ENCODE measurements at regions of chr19 and their contacts with region 1.

Region 1: GRCh38 chr19:53520550-53521372 is 17.2 kb upstream of the ZNF331 start:
- DNase-seq: peak; percentile 93
- ATAC-seq: peak; percentile 99
- H3K4me3 Mint-ChIP-seq: peak overlapping the region; percentile 100
- H3K27ac Mint-ChIP-seq: peak overlapping the region; percentile 89
- H3K4me1 Mint-ChIP-seq: peaks cover 15% of the 10 kb centered on the region
- H3K27me3 Mint-ChIP-seq: no peaks in the 10 kb centered on the region

Region 2: DNA sequence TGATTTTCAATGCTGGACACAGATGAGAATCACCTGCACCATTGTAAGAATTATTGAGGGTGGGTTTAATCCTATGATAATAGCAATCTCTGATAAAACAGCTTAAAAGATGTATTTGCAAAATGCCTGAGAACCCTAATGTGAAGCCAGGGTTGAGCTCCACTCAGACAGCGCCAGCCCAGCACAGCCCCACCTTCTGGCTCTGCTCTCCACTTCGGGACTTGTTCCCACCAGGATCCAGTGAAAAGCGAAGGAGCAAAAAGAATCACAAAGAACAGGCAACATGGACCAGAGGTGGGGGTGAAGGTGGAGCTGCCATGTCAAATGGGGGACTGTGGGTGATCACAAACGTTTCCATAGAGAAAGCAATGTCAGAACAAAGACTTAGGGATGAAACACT is 539.4 kb before region 1 on chr19:
- CTCF ChIA-PET with region 1: no interaction called
- POLR2A ChIA-PET with region 1: no interaction called
- intact Hi-C with region 1: no loop called
- DNase-seq: no peak
- ATAC-seq: no peak
- H3K4me3 Mint-ChIP-seq: no peak overlapping the region
- H3K27ac Mint-ChIP-seq: no peak overlapping the region
- H3K4me1 Mint-ChIP-seq: no peaks in the 10 kb centered on the region
- H3K27me3 Mint-ChIP-seq: no peaks in the 10 kb centered on the region

Region 3: GRCh38 chr19:53254411-53255341 is 266.1 kb before region 1 on chr19 and contains the start of gene ZNF677:
- CTCF ChIA-PET with region 1: no interaction called
- POLR2A ChIA-PET with region 1: no interaction called
- intact Hi-C with region 1: loop called in 1 of 2 experiments (anchors 1 kb)
- DNase-seq: peak; percentile 92
- ATAC-seq: peak; percentile 100
- H3K4me3 Mint-ChIP-seq: peak within 1 kb of the TSS; percentile 84
- H3K27ac Mint-ChIP-seq: peak within 1 kb of the TSS; percentile 53
- H3K4me1 Mint-ChIP-seq: peaks cover 10% of the 10 kb centered on the region
- H3K27me3 Mint-ChIP-seq: no peaks in the 10 kb centered on the region
- total RNA-seq, gene ZNF677: 6.4 to 7.5 TPM

Region 4: DNA sequence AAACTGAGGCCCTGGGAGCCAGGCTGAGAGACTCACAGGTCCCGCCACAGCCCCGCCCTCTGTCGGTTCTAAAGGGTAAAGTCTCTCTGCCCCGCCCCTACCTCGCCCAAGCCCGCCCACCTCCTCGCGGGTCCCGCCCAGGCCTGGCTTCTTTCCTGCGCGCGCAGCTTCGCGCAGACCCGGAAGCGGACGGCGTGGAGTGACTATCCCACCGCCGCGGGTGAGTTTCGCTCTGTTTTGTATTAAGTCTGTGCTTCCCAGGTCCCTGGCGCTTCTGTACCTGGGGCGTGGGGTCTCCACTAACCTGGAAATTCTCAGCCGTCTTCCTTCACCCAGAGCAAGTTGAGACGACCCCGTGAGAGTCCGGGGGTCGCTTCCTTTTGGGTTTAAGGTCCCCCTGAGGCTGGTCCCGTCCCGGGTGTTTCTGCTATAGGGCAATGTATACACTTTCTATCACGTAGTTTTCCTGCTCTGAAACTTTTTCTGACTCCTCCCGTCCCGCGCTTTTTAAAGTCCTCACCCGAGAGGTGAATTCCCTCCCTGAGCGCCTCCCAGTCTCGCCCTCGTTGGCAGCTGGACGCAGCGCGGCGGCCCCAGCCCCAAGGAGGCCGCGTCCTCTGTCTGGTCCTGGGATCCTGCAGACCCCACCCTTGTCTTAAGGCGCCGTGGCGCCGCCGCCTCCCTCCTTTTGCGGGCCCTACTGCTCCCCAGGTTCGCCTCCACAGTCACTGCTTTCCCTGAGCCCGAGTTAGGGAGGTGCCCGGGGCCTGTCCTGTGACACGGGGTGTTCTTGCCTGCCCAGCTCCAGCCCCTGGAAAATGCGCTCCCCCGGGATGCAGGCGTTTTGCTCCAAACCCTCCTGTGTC is 125.6 kb before region 1 on chr19 and contains the start of gene ZNF765:
- CTCF ChIA-PET with region 1: no interaction called
- POLR2A ChIA-PET with region 1: no interaction called
- intact Hi-C with region 1: loop called in 1 of 2 experiments (anchors 1 kb)
- DNase-seq: peak; percentile 98
- ATAC-seq: peak; percentile 99
- H3K4me3 Mint-ChIP-seq: peak within 1 kb of the TSS; percentile 84
- H3K27ac Mint-ChIP-seq: peak within 1 kb of the TSS; percentile 89
- H3K4me1 Mint-ChIP-seq: peaks cover 25% of the 10 kb centered on the region
- H3K27me3 Mint-ChIP-seq: no peaks in the 10 kb centered on the region
- total RNA-seq, gene ZNF765: 10.7 to 10.9 TPM

Region 5: DNA sequence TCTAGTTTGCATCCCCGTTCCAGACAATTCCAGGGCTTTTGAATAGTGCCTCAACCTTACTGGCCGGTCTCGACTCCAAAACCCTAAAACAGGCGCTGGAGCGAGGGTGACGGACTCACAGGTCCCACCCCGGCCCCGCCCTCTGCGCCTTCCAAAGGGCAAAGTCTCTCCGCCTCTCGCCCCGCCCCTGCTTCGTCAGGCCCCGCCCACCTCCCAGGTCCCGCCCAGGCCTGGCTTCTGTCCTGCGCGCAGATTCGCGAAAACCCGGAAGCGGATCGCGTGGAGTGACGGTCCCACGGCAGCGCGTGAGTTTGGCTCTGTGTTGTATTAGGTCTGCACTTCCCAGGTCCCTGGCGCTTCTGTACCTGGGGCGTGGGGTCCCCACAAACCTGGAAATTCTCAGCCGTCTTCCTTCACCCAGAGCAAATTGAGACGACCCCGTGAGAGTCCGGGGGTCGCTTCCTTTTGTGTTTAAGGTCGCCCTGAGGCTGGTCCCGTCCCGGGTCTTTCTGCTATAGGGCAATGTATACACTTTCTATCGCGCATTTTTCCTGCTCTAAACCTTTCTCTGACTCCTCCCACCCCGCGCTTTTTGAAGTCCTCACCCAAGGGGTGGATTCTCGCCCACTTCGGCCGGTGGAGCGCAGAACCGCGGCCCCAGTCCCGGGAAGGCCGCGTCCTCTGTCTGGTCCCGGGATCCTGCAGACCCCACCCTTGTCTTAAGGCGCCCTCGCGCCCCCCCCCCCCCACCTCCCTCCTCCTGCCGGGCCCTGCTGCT is 53.1 kb before region 1 on chr19 and contains the start of gene ZNF813:
- CTCF ChIA-PET with region 1: no interaction called
- POLR2A ChIA-PET with region 1: no interaction called
- intact Hi-C with region 1: loop called (anchors 1 to 5 kb)
- DNase-seq: peak; percentile 98
- ATAC-seq: peak; percentile 98
- H3K4me3 Mint-ChIP-seq: peak within 1 kb of the TSS; percentile 80
- H3K27ac Mint-ChIP-seq: peak within 1 kb of the TSS; percentile 87
- H3K4me1 Mint-ChIP-seq: peaks cover 20% of the 10 kb centered on the region
- H3K27me3 Mint-ChIP-seq: peaks cover 9% of the 10 kb centered on the region
- total RNA-seq, gene ZNF813: 5.8 to 7.4 TPM

Region 6: GRCh38 chr19:53553884-53554791 is 33.4 kb after region 1 on chr19:
- CTCF ChIA-PET with region 1: no interaction called
- POLR2A ChIA-PET with region 1: no interaction called
- intact Hi-C with region 1: loop called in 1 of 2 experiments (anchors 1 kb)
- DNase-seq: peak; percentile 96
- ATAC-seq: peak; percentile 92
- H3K4me3 Mint-ChIP-seq: peak overlapping the region; percentile 92
- H3K27ac Mint-ChIP-seq: peak overlapping the region; percentile 99
- H3K4me1 Mint-ChIP-seq: peaks cover 31% of the 10 kb centered on the region
- H3K27me3 Mint-ChIP-seq: no peaks in the 10 kb centered on the region